A549 (cell line): ENCODE measurements at regions of chr16 and their contacts with region 1.

Region 1: DNA sequence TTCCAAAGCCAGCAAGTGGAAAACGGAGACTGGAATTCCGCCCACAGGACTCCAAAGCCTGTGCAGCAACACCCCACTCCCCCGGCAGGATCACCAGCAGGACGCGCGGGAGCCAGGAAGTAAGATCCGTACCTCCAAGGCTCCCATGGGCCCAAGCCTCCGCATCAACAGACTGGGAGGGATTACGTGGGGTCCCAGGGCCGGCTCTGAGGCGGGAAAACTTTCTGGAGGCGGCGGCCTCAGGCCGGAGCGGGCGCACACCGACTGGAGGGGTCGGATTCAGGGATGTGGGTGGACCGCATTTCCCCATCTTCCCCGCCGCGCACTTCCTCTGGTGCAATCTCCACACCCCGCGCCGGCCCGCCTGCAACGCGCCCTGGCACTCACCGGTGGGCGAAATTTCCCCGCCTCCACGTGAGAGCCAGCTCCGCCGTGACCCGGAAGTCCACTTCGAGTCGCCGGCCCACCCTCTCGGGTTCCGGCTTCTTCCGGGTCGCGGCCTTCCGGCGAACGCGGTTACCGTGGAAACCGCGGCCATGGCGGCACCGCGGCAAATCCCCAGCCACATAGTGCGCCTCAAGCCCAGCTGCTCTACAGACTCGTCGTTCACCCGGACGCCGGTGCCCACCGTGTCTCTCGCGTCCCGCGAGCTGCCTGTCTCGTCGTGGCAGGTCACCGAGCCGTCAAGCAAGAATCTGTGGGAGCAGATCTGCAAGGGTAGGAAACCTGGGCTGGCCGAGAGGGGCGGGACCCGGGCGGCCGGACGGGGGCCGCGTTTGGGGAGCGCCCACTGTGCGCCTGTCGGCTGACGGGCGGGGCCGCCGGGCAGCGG is at the starts of genes IQCK and KNOP1:
- DNase-seq: peak; percentile 90
- ATAC-seq: peak; percentile 95 to 97
- H3K4me3 ChIP-seq: peak within 1 kb of the TSS; percentile 89
- H3K27ac ChIP-seq: peak within 1 kb of the TSS; percentile 89 to 92
- H3K4me1 ChIP-seq: peaks cover 28% of the 10 kb centered on the region
- CTCF ChIP-seq: no peak
- EP300 ChIP-seq: no peak
- POLR2A ChIP-seq: peak; percentile 75
- RAD21 ChIP-seq: no peak
- polyA plus RNA-seq, gene IQCK: 13.0 and 15.6 TPM in 2 replicates
- polyA plus RNA-seq, gene KNOP1: 26.2 and 44.8 TPM in 2 replicates

Region 2: GRCh38 chr16:19497176-19497575 is 220.8 kb before region 1 on chr16:
- CTCF ChIA-PET with region 1: no interaction called
- POLR2A ChIA-PET with region 1: no interaction called
- DNase-seq: no peak
- ATAC-seq: no peak
- H3K4me3 ChIP-seq: no peak overlapping the region
- H3K27ac ChIP-seq: no peak overlapping the region
- H3K4me1 ChIP-seq: no peaks in the 10 kb centered on the region
- CTCF ChIP-seq: no peak
- EP300 ChIP-seq: no peak
- POLR2A ChIP-seq: no peak
- RAD21 ChIP-seq: no peak

Region 3: GRCh38 chr16:19574615-19575014 is 143.4 kb before region 1 on chr16:
- CTCF ChIA-PET with region 1: no interaction called
- POLR2A ChIA-PET with region 1: no interaction called
- DNase-seq: no peak
- ATAC-seq: no peak
- H3K4me3 ChIP-seq: no peak overlapping the region
- H3K27ac ChIP-seq: no peak overlapping the region
- H3K4me1 ChIP-seq: no peaks in the 10 kb centered on the region
- CTCF ChIP-seq: no peak
- EP300 ChIP-seq: no peak
- POLR2A ChIP-seq: no peak
- RAD21 ChIP-seq: no peak

Region 4: GRCh38 chr16:19601083-19601976 is 116.7 kb before region 1 on chr16:
- CTCF ChIA-PET with region 1: interaction called, 18 read pairs
- POLR2A ChIA-PET with region 1: no interaction called
- DNase-seq: peak; percentile 41 to 42
- ATAC-seq: peak; percentile 56 to 58; a peak in 4 of 6 replicates
- H3K4me3 ChIP-seq: no peak overlapping the region
- H3K27ac ChIP-seq: peak overlapping the region in 1 of 2 experiments; percentile 43; a peak in 3 of 6 replicates
- H3K4me1 ChIP-seq: peaks cover 14% of the 10 kb centered on the region
- CTCF ChIP-seq: peak; percentile 88
- EP300 ChIP-seq: no peak
- POLR2A ChIP-seq: no peak
- RAD21 ChIP-seq: peak; percentile 89 to 92

Region 5: GRCh38 chr16:19810817-19811731 is 93.1 kb after region 1 on chr16:
- CTCF ChIA-PET with region 1: no interaction called
- POLR2A ChIA-PET with region 1: interaction called, 10 read pairs
- DNase-seq: peak; percentile 79 to 88
- ATAC-seq: peak; percentile 84 to 86
- H3K4me3 ChIP-seq: peak overlapping the region; percentile 8; the same call in 1 of the 3 replicates
- H3K27ac ChIP-seq: peak overlapping the region; percentile 74 to 87
- H3K4me1 ChIP-seq: peaks cover 56% of the 10 kb centered on the region
- CTCF ChIP-seq: no peak
- EP300 ChIP-seq: peak; percentile 65 to 81; a peak in 3 of 5 replicates
- POLR2A ChIP-seq: no peak
- RAD21 ChIP-seq: peak in 1 of 2 experiments; percentile 36; a peak in 2 of 5 replicates

Region 6: DNA sequence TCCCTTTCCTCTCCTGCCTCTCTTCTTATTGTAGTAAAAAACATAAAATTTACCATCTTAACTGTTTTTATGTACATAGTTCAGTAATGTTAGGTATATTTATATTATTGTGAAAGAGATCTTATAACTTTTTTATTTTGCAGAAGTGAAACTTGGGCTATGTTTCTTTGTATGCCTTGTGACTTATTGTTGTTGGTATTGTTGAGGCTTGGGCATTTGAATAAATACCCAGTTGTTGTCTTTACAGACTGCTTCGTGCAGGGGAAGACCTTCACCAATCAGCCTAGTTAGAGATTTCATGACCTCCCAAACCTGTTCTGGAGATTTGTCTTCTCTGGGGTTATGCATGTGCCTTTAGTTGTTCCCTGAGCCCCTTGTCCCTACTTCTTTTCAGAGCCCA is 1120.3 kb after region 1 on chr16:
- CTCF ChIA-PET with region 1: no interaction called
- POLR2A ChIA-PET with region 1: no interaction called
- DNase-seq: no peak
- ATAC-seq: no peak
- H3K4me3 ChIP-seq: no peak overlapping the region
- H3K27ac ChIP-seq: no peak overlapping the region
- H3K4me1 ChIP-seq: no peaks in the 10 kb centered on the region
- CTCF ChIP-seq: no peak
- EP300 ChIP-seq: no peak
- POLR2A ChIP-seq: no peak
- RAD21 ChIP-seq: no peak

Region 7: DNA sequence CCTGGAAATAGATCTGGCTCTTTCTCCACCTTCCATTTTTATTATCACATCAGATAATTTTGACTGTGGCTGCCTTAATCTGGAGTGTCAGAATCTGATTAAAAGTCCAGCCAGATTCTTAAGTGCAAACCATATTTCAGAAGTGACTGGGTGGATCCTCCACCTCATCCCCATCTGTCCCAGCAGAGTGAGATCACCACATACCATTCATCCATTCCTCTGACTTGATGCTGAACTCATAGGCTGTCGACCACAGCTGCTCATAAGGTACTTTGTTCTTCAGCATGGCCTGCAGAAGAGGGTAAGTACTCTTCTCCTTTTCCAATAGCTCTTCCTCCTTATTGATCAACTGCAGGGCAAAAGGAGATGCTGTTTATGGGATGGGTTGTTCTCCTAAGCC is 1379.2 kb after region 1 on chr16:
- CTCF ChIA-PET with region 1: no interaction called
- POLR2A ChIA-PET with region 1: no interaction called
- DNase-seq: no peak
- ATAC-seq: no peak
- H3K4me3 ChIP-seq: no peak overlapping the region
- H3K27ac ChIP-seq: no peak overlapping the region
- H3K4me1 ChIP-seq: peaks cover 14% of the 10 kb centered on the region
- CTCF ChIP-seq: no peak
- EP300 ChIP-seq: no peak
- POLR2A ChIP-seq: no peak
- RAD21 ChIP-seq: no peak